ENCODE measurements at regions of chr6 and their contacts with region 1.

Region 1: DNA sequence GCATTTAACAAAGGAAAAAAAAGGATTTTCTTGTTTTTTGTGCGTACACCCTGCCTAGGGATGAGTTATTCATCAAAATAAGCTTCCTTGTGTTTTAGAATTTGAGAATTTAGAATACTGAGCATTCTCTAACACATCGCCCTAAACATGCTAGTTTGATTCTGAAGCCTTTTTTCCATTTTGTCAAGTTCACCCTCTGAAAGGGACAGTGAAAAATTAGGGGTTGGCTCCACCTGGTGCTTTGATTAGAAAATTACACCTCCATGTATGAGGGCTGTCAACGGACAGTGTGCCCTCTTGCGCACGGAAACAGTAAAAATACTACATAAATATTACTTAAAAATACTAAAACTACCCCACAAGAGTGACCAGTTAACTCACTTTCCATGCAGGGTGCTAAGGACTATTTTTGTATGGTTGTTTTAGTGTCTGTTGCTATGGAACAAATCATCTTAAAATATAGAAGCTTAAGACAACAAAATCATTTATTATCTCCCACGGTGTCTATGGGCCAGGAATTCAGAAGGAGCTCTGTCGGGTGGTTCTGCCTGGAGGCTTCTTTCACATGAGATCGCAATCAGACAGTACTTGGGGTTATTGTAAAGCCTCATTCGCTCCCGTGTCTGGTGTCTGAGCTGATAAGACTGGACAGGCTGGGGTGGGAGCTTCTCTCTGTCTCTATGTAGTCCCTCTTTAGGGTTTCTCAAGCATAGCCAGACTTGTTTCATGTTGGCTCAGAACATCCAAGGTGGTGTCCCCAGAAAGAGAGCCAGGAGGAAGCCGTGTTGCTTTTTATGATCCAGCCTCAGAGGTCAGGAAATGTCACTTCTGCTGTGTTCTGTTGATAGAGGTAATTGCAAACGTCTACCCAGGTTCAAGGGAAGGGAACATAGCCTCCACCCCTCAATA is 41.1 kb upstream of the TMEM170B start:
- DNase-seq: peak; percentile 71
- H3K4me3 ChIP-seq: no peak overlapping the region
- H3K27ac ChIP-seq: peak overlapping the region in 1 of 2 donors; percentile 23
- H3K4me1 ChIP-seq: no peaks in the 10 kb centered on the region
- H3K27me3 ChIP-seq: no peaks in the 10 kb centered on the region
- CTCF ChIP-seq: peak; percentile 69 to 98 (median 92)
- POLR2A ChIP-seq: no peak

Region 2: GRCh38 chr6:11144393-11144851 is 352.0 kb before region 1 on chr6:
- intact Hi-C with region 1: loop called (anchors 1 kb)
- DNase-seq: peak; percentile 78
- H3K4me3 ChIP-seq: no peak overlapping the region
- H3K27ac ChIP-seq: no peak overlapping the region
- H3K4me1 ChIP-seq: no peaks in the 10 kb centered on the region
- H3K27me3 ChIP-seq: no peaks in the 10 kb centered on the region
- CTCF ChIP-seq: peak; percentile 78 to 92 (median 86)
- POLR2A ChIP-seq: no peak

Region 3: GRCh38 chr6:11172501-11173332 is 323.7 kb before region 1 on chr6:
- intact Hi-C with region 1: loop called (anchors 2 kb)
- DNase-seq: peak; percentile 60
- H3K4me3 ChIP-seq: no peak overlapping the region
- H3K27ac ChIP-seq: no peak overlapping the region
- H3K4me1 ChIP-seq: no peaks in the 10 kb centered on the region
- H3K27me3 ChIP-seq: no peaks in the 10 kb centered on the region
- CTCF ChIP-seq: peak; percentile 62 to 93 (median 80)
- POLR2A ChIP-seq: no peak

Region 4: GRCh38 chr6:11232193-11232769 is 264.1 kb before region 1 on chr6 and contains the start of gene NEDD9:
- intact Hi-C with region 1: loop called (anchors 10 kb)
- DNase-seq: peak; percentile 99
- H3K4me3 ChIP-seq: peak within 1 kb of the TSS; percentile 53 to 59
- H3K27ac ChIP-seq: peak within 1 kb of the TSS; percentile 86 to 94
- H3K4me1 ChIP-seq: no peaks in the 10 kb centered on the region
- H3K27me3 ChIP-seq: no peaks in the 10 kb centered on the region
- CTCF ChIP-seq: peak in 1 of 4 experiments; percentile 11
- POLR2A ChIP-seq: peak; percentile 100
- total RNA-seq, gene NEDD9: 51.1 to 72.1 TPM

Region 5: DNA sequence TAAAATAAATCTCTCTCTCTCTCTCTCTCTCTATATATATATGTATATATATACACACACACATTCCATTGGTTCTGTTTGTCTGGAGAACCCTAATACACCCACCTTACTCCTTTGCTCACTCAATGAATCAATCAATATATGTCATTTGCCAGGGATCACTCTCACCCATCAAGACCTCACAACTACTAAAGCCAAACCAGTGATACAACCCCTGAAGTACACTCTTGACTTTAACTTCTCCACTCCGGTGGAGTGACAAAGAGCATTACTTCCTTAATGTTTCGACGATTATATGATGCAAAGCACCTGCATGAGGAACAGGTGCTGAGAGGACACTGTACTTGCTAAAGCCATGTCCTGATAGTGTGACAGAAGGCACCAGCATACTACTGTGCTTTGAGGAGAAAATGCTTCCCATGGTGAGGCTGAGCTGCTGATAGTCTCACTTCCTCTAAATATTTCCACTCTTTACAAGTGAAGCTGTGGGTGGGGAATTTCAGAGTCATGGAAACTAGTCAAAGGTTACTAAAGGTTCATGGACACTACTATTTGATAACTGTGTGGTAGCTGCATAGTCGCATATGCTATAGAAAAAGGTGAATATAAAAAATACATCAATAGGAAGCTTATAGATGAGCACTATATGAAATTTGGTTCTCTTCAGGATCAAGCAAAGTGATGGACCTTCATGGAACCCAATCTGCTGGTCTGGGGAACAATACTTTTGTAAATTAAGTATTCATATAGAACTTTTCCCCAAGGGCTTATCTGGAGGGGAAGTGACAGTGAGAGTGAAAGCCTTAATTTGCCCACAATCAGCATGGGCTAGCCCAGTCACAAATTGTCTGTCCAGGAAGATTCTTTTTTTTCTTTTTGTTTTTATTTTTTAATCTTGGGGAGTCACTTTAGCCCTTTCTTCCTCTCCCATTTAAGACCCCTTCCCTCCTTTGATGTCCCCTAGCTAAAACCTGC is 122.1 kb before region 1 on chr6:
- intact Hi-C with region 1: no loop called
- DNase-seq: no peak
- H3K4me3 ChIP-seq: no peak overlapping the region
- H3K27ac ChIP-seq: no peak overlapping the region
- H3K4me1 ChIP-seq: no peaks in the 10 kb centered on the region
- H3K27me3 ChIP-seq: no peaks in the 10 kb centered on the region
- CTCF ChIP-seq: no peak
- POLR2A ChIP-seq: no peak

Region 6: DNA sequence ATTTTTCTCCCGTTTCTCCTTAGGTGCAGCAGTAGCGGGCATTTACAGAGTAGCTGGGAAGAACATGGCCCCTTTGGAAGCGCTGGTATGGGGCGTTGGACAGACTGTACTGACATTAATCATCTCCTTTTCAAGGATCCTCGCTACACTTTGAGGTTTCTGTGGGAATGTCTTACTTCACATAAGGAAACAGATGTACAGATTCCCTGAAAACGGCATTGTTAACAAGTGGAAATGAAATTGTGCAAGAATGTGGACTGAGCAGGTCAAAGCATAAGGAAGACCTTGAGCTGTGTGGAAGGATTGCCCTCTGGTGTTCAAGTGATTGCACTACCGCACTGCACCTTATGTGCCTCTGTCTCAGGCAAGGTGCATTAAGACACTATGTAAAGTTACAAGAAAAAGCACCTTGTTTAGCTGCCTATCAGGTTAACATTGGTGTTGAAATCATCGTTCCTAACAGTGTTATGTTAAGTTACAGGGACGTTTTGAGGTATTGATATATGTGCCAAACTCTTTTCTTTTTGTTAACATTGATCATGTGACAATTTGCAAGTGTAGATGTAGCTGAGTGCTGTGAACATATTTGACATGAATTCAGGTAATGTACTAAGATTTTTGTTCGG is 79.1 kb after region 1 on chr6:
- intact Hi-C with region 1: loop called (anchors 10 kb)
- DNase-seq: peak; percentile 51
- H3K4me3 ChIP-seq: no peak overlapping the region
- H3K27ac ChIP-seq: no peak overlapping the region
- H3K4me1 ChIP-seq: no peaks in the 10 kb centered on the region
- H3K27me3 ChIP-seq: no peaks in the 10 kb centered on the region
- CTCF ChIP-seq: peak; percentile 30 to 90 (median 72)
- POLR2A ChIP-seq: no peak

Measured in prostate gland (tissue), 2 donors.